ENCODE measurements at regions of chr6 and their contacts with region 1.

Region 1: GRCh38 chr6:53492860-53493634 is 51.9 kb downstream of the GCLC start:
- H3K4me3 ChIP-seq: peak overlapping the region; percentile 12; the same call in 1 of the 2 replicates
- H3K27ac ChIP-seq: no peak overlapping the region
- H3K4me1 ChIP-seq: peaks cover 2% of the 10 kb centered on the region; the same call in 1 of the 2 replicates
- CTCF ChIP-seq: peak; percentile 30

Region 2: GRCh38 chr6:53171605-53172446 is 321.2 kb before region 1 on chr6:
- CTCF ChIA-PET with region 1: interaction called, 13 read pairs
- POLR2A ChIA-PET with region 1: no interaction called
- H3K4me3 ChIP-seq: no peak overlapping the region
- H3K27ac ChIP-seq: no peak overlapping the region
- H3K4me1 ChIP-seq: no peaks in the 10 kb centered on the region
- CTCF ChIP-seq: peak; percentile 99

Region 3: GRCh38 chr6:53309059-53309900 is 183.8 kb before region 1 on chr6:
- CTCF ChIA-PET with region 1: no interaction called
- POLR2A ChIA-PET with region 1: no interaction called
- H3K4me3 ChIP-seq: no peak overlapping the region
- H3K27ac ChIP-seq: no peak overlapping the region; the same call in 1 of the 2 replicates
- H3K4me1 ChIP-seq: peaks cover 18% of the 10 kb centered on the region
- CTCF ChIP-seq: no peak

Region 4: DNA sequence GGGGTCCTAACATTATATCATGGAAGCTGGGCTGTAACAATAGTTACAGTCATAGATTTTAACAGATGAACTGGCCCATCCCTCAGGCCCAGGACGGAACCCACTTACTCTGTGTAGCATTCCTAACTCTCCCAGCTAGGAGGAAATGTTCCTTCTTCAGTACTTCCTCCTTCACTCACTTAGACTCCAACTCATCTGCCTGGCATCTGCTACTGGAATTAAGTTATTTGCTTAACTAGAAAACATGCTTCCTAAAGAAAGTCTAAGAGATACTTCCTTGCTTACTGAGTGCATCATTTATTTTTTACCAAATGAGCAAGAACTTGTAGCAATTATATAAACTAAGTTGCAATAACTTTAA is 31.4 kb after region 1 on chr6:
- CTCF ChIA-PET with region 1: interaction called, 25 read pairs
- POLR2A ChIA-PET with region 1: no interaction called
- H3K4me3 ChIP-seq: no peak overlapping the region
- H3K27ac ChIP-seq: no peak overlapping the region
- H3K4me1 ChIP-seq: peaks cover 35% of the 10 kb centered on the region
- CTCF ChIP-seq: no peak

Region 5: GRCh38 chr6:53639520-53639919 is 146.5 kb after region 1 on chr6:
- CTCF ChIA-PET with region 1: interaction called, 23 read pairs
- POLR2A ChIA-PET with region 1: no interaction called
- H3K4me3 ChIP-seq: no peak overlapping the region
- H3K27ac ChIP-seq: no peak overlapping the region
- H3K4me1 ChIP-seq: peaks cover 4% of the 10 kb centered on the region; the same call in 1 of the 2 replicates
- CTCF ChIP-seq: no peak

Region 6: DNA sequence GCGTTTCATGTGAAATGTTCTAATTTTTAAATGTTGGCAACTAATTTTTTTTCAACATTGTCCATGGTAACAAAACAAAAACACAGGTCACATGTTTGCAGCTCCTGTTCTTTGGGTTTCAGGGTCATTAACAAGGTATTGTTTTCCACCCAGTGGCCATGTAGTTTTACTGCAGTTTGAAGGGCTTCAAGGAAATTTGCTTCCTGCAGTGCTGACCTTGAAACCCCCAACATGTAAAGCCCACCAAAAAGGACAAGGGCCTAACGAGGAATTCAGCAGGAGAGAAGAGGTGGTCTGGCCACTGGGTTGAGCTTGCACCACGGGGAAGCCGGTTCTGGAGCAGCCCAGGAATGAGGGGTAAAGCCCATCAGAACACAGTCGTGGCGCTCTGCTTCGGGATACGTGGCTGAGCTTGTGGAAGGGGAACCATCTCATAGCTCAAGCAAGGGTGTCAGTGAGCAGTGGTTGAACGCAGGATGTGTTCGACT is 186.4 kb after region 1 on chr6:
- CTCF ChIA-PET with region 1: interaction called, 21 read pairs
- POLR2A ChIA-PET with region 1: no interaction called
- H3K4me3 ChIP-seq: no peak overlapping the region
- H3K27ac ChIP-seq: no peak overlapping the region
- H3K4me1 ChIP-seq: no peaks in the 10 kb centered on the region
- CTCF ChIP-seq: no peak

Region 7: DNA sequence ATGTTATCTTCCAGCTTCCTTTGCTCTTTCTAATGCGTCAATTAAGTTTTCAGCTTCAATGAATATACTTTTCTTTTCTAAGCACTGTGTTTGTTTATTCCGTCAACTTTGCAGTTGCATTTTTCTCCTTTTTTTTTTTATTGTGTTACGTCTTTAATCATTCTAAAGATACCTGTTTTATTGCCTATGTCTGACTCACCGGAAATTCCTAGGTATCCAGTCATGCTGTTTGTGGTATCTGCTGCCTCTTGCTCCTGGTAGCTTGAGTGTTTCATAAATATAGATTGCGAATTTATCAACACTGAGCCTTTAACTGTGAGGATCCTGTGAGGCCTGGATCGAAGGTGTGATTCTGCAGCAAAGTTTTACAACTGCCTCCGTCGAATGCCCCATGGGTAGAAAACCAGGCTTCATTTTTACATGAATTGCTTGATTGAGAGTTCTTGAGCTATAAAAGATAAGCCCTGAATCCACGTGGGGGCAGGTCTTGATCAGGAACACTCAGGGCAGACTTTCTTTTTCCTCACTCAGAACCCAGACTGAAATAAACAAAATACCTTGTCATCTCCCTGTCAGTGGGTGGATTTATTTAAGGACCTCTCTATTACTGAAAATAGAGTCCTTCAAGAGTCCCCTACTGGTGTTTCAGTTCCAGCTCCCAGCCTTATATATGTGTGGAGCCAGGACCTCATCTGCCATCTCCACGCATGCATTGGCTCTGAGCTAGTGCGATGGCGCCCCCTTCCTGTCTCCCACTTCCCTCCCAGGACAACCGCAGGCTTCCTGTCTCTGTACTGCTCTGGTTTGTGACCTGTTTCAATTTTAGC is 241.6 kb after region 1 on chr6:
- CTCF ChIA-PET with region 1: interaction called, 270 read pairs
- POLR2A ChIA-PET with region 1: interaction called, 3 read pairs
- H3K4me3 ChIP-seq: peak overlapping the region; percentile 10; the same call in 1 of the 2 replicates
- H3K27ac ChIP-seq: peak overlapping the region; percentile 29; the same call in 1 of the 2 replicates
- H3K4me1 ChIP-seq: peaks cover 6% of the 10 kb centered on the region; the same call in 1 of the 2 replicates
- CTCF ChIP-seq: no peak

Measured in HEK293 (cell line).